CD4-positive, alpha-beta memory T cell (primary cell): ENCODE measurements at regions of chr4 and their contacts with region 1.

Region 1: GRCh38 chr4:173334085-173334772 is at the start of gene HMGB2:
- DNase-seq: peak; percentile 98 to 100 (median 100)
- H3K4me3 ChIP-seq: peak within 1 kb of the TSS; percentile 92 to 95
- H3K4me3 Mint-ChIP-seq: peak within 1 kb of the TSS; percentile 97 to 100 (median 98)
- H3K27ac ChIP-seq: peak within 1 kb of the TSS; percentile 91
- H3K27ac Mint-ChIP-seq: peak within 1 kb of the TSS; percentile 95 to 99 (median 98)
- H3K4me1 ChIP-seq: peaks cover 26% of the 10 kb centered on the region
- H3K4me1 Mint-ChIP-seq: peaks cover 17 to 33% (median 21%) of the 10 kb centered on the region in 4 donors
- H3K27me3 ChIP-seq: no peaks in the 10 kb centered on the region
- H3K27me3 Mint-ChIP-seq: peaks cover 0 to 2% of the 10 kb centered on the region in 2 donors
- total RNA-seq, gene HMGB2: 110 to 116 TPM

Region 2: DNA sequence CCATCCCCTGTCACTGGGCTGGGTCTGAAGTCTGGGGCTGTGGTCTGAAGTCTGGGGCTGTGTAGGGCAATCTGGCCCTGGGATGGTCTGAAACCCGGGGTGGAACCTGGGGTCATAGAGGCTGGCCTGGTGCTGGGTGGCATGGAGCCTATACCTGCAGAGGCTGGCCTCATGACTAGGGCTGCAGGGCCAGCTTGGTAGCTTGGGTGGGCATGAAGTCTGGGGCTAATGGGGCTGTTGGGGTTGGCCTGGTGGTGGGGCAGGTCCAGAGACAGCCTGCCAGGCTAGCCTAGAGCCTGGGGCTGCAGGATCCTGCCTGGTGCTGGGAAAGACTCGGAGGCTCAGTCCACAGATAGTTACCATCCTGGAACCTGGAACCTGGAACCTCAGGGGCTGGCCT is 128.6 kb before region 1 on chr4:
- CTCF ChIA-PET with region 1: no interaction called
- POLR2A ChIA-PET with region 1: no interaction called
- intact Hi-C with region 1: no loop called
- DNase-seq: no peak
- H3K4me3 ChIP-seq: no peak overlapping the region
- H3K4me3 Mint-ChIP-seq: no peak overlapping the region
- H3K27ac ChIP-seq: no peak overlapping the region
- H3K27ac Mint-ChIP-seq: peak overlapping the region in 1 of 7 donors; percentile 44
- H3K4me1 ChIP-seq: no peaks in the 10 kb centered on the region
- H3K4me1 Mint-ChIP-seq: peaks cover 11 to 19% (median 12%) of the 10 kb centered on the region in 4 donors
- H3K27me3 ChIP-seq: no peaks in the 10 kb centered on the region
- H3K27me3 Mint-ChIP-seq: no peaks in the 10 kb centered on the region

Region 3: GRCh38 chr4:173257732-173258717 is 76.2 kb before region 1 on chr4:
- CTCF ChIA-PET with region 1: no interaction called
- POLR2A ChIA-PET with region 1: no interaction called
- intact Hi-C with region 1: no loop called
- DNase-seq: peak; percentile 46 to 55 (median 51)
- H3K4me3 ChIP-seq: no peak overlapping the region
- H3K4me3 Mint-ChIP-seq: no peak overlapping the region
- H3K27ac ChIP-seq: no peak overlapping the region
- H3K27ac Mint-ChIP-seq: no peak overlapping the region
- H3K4me1 ChIP-seq: no peaks in the 10 kb centered on the region
- H3K4me1 Mint-ChIP-seq: peaks cover 4 to 9% (median 6%) of the 10 kb centered on the region in 4 donors
- H3K27me3 ChIP-seq: no peaks in the 10 kb centered on the region
- H3K27me3 Mint-ChIP-seq: no peaks in the 10 kb centered on the region

Region 4: GRCh38 chr4:173318648-173319211 is 15.5 kb before region 1 on chr4:
- CTCF ChIA-PET with region 1: interaction called, 49 read pairs
- POLR2A ChIA-PET with region 1: interaction called, 30 read pairs
- intact Hi-C with region 1: no loop called
- DNase-seq: peak in 4 of 5 donors; percentile 28 to 37 (median 31)
- H3K4me3 ChIP-seq: no peak overlapping the region
- H3K4me3 Mint-ChIP-seq: no peak overlapping the region
- H3K27ac ChIP-seq: no peak overlapping the region
- H3K27ac Mint-ChIP-seq: no peak overlapping the region
- H3K4me1 ChIP-seq: no peaks in the 10 kb centered on the region
- H3K4me1 Mint-ChIP-seq: peaks cover 0 to 2% (median under 1%) of the 10 kb centered on the region in 4 donors
- H3K27me3 ChIP-seq: no peaks in the 10 kb centered on the region
- H3K27me3 Mint-ChIP-seq: no peaks in the 10 kb centered on the region

Region 5: DNA sequence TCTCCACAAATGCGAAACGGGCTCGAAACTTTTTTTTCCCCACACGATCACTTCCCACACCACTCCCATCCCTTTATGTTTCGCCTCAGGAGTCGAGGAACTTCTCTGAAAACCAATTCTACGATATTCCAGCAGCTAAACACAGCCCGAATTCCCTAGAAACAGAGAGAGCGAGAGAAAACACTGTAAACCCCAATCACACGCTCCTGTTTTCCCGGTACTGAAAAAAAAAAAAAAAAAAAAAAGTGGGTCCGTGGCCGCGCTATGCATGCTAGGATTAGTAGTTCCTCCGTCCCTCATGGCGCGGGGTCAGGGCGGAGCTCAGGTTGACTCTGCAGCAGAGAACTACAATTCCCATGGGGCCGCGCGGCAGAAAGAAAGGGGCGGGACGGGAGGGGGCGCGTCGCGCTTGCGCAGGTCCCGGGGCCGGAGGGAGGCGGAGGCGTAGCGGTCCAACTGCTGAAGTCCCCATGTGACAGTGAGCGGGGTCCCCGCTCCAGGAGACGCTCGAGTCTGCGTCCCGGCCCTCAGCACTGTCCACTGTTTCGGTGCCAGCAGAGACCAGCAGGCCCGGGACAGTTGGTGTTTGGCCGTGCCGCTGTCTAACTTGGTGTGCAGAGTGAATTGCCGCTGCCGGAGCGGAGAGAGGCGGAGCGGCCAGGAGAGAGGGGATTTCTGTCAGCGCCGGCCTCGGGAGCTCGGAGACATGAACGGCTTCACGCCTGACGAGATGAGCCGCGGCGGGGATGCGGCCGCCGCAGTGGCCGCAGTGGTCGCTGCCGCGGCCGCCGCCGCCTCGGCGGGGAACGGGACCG is 36.5 kb after region 1 on chr4 and contains the start of gene SAP30:
- CTCF ChIA-PET with region 1: interaction called, 72 read pairs
- POLR2A ChIA-PET with region 1: interaction called, 375 read pairs
- intact Hi-C with region 1: loop called (anchors 1 kb)
- DNase-seq: peak; percentile 90 to 98 (median 94)
- H3K4me3 ChIP-seq: peak within 1 kb of the TSS; percentile 93 to 95
- H3K4me3 Mint-ChIP-seq: peak within 1 kb of the TSS; percentile 98 to 100 (median 99)
- H3K27ac ChIP-seq: peak within 1 kb of the TSS; percentile 68
- H3K27ac Mint-ChIP-seq: peak within 1 kb of the TSS; percentile 81 to 97 (median 96)
- H3K4me1 ChIP-seq: peaks cover 47% of the 10 kb centered on the region
- H3K4me1 Mint-ChIP-seq: peaks cover 14 to 41% (median 29%) of the 10 kb centered on the region in 4 donors
- H3K27me3 ChIP-seq: no peaks in the 10 kb centered on the region
- H3K27me3 Mint-ChIP-seq: no peaks in the 10 kb centered on the region
- total RNA-seq, gene SAP30: 5.6 to 7.0 TPM

Region 6: GRCh38 chr4:173505924-173506518 is 171.8 kb after region 1 on chr4:
- CTCF ChIA-PET with region 1: no interaction called
- POLR2A ChIA-PET with region 1: interaction called, 5 read pairs
- intact Hi-C with region 1: loop called (anchors 5 kb)
- DNase-seq: peak in 1 of 5 donors; percentile 42
- H3K4me3 ChIP-seq: no peak overlapping the region
- H3K4me3 Mint-ChIP-seq: peak overlapping the region in 2 of 8 donors; percentile 8 to 58
- H3K27ac ChIP-seq: no peak overlapping the region
- H3K27ac Mint-ChIP-seq: no peak overlapping the region
- H3K4me1 ChIP-seq: peaks cover 32% of the 10 kb centered on the region
- H3K4me1 Mint-ChIP-seq: peaks cover 4 to 34% (median 23%) of the 10 kb centered on the region in 4 donors
- H3K27me3 ChIP-seq: peaks cover 49% of the 10 kb centered on the region
- H3K27me3 Mint-ChIP-seq: peaks cover 63 to 80% of the 10 kb centered on the region in 2 donors

Region 7: DNA sequence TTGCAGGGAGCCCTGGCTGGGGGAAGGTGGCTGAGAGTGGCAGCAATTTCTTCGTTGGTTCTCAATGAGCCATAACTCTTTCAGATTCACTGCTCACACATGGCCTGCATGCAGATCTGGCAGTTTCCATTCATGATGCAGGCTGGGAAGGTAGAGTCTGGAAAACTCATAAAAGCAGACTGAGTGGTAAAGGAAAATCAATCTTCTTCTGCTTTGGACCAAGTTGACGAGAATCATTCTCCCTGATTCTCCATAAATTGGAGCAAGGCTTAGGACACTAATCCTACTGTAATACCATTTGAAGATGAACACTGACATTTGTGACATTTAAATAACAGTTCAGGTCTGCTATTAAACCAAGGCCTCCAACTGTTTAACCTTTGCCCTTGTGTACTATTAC is 231.1 kb after region 1 on chr4:
- CTCF ChIA-PET with region 1: no interaction called
- POLR2A ChIA-PET with region 1: no interaction called
- intact Hi-C with region 1: no loop called
- DNase-seq: no peak
- H3K4me3 ChIP-seq: no peak overlapping the region
- H3K4me3 Mint-ChIP-seq: no peak overlapping the region
- H3K27ac ChIP-seq: no peak overlapping the region
- H3K27ac Mint-ChIP-seq: no peak overlapping the region
- H3K4me1 ChIP-seq: no peaks in the 10 kb centered on the region
- H3K4me1 Mint-ChIP-seq: no peaks in the 10 kb centered on the region
- H3K27me3 ChIP-seq: no peaks in the 10 kb centered on the region
- H3K27me3 Mint-ChIP-seq: peaks cover 10 to 11% of the 10 kb centered on the region in 2 donors